Activated CD4-positive, alpha-beta T cell treated with anti-CD3 and anti-CD28 coated beads, Interleukin-2, amount 10 ng/mL, durations not matched to agents 24 days and 14 days (primary cell): ENCODE measurements at regions of chr18 and their contacts with region 1.

Region 1: DNA sequence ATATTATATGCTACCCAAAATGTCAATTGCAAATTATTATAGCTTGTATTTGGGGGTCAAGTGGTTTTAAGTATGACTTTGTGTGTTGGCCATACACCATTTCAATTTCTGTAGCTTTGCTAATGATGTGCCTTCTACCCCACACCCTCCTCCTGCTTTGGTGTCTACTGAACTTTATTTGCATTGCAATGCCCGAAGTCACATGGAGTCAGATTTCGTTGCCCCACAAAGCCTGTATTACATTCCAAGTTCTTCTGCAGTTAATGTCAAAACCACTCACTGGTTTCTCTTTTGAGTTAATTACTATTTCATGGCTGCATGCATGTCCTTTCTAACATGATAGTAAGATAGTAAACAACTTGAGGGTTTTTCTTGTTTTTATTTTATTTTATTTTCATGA is 528.9 kb downstream of the RIT2 start:
- DNase-seq: no peak
- H3K4me3 Mint-ChIP-seq: no peak overlapping the region
- H3K27ac Mint-ChIP-seq: no peak overlapping the region
- H3K4me1 Mint-ChIP-seq: no peaks in the 10 kb centered on the region
- H3K27me3 Mint-ChIP-seq: no peaks in the 10 kb centered on the region

Region 2: DNA sequence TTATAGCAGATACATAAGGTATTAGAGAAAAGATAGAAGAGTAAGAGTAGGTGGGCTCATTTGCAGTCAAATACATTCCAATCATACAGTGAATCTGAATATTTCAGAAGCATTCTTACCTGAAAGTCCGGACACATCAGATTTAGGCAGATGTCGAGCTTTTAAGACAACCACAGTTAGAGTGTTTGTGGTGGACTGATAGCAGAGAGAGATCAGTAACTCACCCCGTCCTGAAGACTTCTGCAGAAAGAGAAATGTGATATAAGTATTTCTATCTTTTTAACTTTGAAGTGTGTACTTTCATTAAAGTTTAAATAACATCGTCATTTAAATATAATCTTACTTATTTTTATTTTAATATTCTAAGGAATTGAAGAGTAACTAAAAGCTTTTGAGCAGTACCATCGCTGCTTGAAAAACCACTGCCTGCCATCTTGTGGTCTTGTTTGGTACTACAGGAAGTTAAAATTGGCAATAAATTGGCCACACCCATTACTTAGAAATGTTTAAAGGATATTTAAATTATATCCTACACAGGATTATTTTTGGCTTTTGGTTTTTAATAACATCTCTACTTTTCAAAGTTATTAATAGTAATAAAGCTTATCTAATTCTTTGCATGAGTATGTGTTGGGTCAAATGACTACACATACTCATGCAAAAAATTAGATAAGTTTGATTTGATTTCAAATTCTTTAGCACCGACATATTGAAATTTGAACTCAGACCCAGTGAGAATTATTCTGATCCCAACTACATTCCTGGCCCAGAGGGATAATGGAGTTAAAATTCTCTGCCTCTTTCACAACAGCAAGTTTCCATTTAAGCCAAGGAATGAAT is 685.2 kb after region 1 on chr18:
- intact Hi-C with region 1: loop called (anchors 10 kb)
- DNase-seq: peak; percentile 77
- H3K4me3 Mint-ChIP-seq: no peak overlapping the region
- H3K27ac Mint-ChIP-seq: no peak overlapping the region
- H3K4me1 Mint-ChIP-seq: no peaks in the 10 kb centered on the region
- H3K27me3 Mint-ChIP-seq: peaks cover 2% of the 10 kb centered on the region